ENCODE measurements at regions of chr14 and their contacts with region 1.

Region 1: DNA sequence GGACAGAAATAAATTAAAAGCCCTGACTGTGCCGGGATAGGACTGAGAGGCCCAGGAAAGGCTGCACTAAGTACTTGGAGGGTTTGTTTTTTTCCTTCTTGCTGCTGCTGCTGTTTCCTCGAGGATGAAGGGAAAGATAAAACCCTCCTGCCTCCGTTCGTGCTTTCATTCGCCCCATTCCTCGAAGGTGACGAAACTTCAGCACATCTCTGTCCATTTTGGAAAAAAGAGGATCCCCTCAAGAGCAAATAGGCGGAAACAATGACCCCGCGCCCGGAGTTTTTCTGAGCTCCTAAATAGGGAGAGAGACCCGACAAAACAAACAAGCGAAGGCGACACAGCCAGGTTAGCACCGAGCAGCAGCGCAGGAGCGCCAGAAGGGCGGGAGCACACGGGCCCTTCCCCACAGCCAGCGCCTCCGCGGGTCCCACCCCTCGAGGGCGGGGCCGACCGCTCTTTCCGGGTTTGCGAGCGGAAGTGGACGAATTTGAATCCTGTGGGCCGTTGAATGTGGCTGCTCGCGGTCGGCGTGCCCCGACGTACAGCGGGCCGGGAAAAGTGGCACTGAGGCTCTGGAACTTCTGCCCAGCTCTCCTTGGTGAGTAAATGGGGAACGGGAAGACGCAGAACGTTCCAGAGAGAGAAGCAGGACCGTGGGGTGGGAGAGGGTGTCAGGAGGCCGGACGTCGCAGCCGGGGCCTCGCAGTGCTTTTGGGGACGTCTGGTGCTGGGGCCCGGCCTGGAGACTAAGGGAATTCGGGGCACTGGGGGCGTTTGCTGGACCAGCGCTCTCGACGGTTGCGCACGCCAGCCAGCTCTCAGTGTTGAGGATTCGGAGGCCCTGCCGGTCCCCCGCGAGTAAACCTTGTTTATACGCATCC is at the start of gene G2E3:
- DNase-seq: peak; percentile 84 to 92
- ATAC-seq: peak; percentile 98
- H3K4me3 ChIP-seq: peak within 1 kb of the TSS; percentile 96
- H3K4me3 Mint-ChIP-seq: peak within 1 kb of the TSS; percentile 98
- H3K27ac ChIP-seq: peak within 1 kb of the TSS; percentile 86
- H3K27ac Mint-ChIP-seq: peak within 1 kb of the TSS; percentile 92 to 96
- H3K4me1 ChIP-seq: peaks cover 15% of the 10 kb centered on the region
- H3K4me1 Mint-ChIP-seq: peaks cover 35 to 39% of the 10 kb centered on the region in 2 donors
- H3K27me3 ChIP-seq: no peaks in the 10 kb centered on the region
- H3K27me3 Mint-ChIP-seq: peaks cover 0 to 3% of the 10 kb centered on the region in 2 donors
- CTCF ChIP-seq: no peak
- total RNA-seq, gene G2E3: 28.7 to 47.1 (median 33.4) TPM

Region 2: DNA sequence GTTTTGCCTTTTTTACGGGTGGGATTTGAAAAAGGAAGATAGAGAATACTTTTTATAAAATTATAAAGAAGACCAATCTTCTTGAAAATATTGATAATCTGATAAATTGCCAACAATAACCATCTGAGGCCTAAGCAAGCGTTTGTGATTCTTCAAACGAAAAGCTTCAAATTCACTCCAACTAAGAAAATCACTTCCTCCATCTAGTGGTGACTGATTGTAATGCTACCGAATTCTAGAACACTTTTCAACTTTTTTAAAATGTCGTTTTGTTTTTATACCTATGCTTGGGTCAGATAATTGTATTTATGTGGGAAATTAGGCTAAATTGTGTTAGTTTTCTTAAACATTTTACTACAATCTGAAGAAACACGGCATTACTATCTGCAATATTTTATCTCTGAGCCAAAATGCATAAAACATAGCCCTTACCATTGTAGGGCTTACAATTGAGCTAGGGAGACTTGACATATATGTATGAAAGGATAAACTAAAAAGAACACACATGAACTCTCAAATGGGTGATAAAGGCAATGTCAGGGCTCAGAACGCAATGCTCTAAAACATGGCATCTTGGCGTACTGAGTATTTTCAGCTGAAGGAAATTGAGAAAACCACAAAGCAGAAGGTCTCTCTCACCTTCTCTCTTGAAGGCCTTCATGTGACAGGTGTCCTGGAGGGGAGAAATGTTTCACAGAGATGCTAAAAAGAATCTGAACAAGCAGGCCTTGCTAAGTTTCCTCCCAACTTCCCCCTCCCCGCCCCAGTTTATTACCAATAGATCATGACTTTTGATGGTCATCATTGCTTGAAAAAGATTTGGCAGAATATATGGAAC is 36.8 kb before region 1 on chr14:
- intact Hi-C with region 1: no loop called
- DNase-seq: peak in 1 of 2 donors; percentile 68
- ATAC-seq: peak in 2 of 3 donors; percentile 29 to 53
- H3K4me3 ChIP-seq: no peak overlapping the region
- H3K4me3 Mint-ChIP-seq: no peak overlapping the region
- H3K27ac ChIP-seq: no peak overlapping the region
- H3K27ac Mint-ChIP-seq: no peak overlapping the region
- H3K4me1 ChIP-seq: no peaks in the 10 kb centered on the region
- H3K4me1 Mint-ChIP-seq: peaks cover 3 to 5% of the 10 kb centered on the region in 2 donors
- H3K27me3 ChIP-seq: no peaks in the 10 kb centered on the region
- H3K27me3 Mint-ChIP-seq: no peaks in the 10 kb centered on the region
- CTCF ChIP-seq: peak; percentile 80

Region 3: DNA sequence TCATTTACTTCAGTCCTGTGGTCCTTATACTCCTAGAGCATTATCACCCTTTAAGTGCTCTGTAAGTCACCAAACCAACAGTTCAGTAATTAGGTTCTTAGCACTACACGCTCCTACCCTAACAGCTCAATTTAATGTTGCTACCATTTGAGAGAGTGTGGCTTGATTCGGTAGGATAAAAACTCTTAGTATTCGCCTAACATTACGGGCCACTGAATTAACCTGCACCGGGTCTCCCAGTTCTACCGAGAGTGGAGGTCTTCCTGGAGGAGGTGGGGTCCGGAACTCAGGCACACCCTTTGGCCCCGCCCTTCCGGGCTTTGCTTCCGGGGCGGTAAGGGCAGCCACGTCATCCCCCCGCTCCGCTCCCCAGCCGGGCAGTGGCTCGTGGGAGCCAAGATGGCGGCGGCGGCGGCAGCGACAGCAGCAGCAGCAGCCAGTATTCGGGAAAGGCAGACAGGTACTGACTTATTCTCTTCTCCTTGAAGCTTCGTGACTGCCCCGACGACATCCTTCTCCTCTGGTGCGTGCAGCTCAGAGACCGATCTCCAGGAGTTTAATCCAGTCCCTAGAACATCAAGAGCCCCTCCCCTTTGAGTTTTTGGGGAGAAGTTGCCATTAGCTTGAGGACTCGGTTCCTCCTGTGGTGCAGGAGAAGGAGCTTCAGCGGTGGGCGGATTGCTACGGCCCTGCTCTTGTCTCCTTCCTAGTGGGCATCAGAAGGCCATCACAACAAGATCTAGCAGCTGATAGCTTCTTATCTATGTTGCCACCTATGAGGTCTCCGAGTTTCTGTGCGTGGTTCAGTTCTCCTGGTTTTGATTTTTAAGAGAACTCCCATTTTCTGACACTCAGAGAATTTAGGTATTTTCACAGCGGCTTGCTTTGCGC is 63.3 kb after region 1 on chr14 and contains the start of gene SCFD1:
- intact Hi-C with region 1: loop called (anchors 1 kb)
- DNase-seq: peak; percentile 88 to 96
- ATAC-seq: peak; percentile 98 to 100 (median 98)
- H3K4me3 ChIP-seq: peak within 1 kb of the TSS; percentile 74
- H3K4me3 Mint-ChIP-seq: peak within 1 kb of the TSS; percentile 92
- H3K27ac ChIP-seq: peak within 1 kb of the TSS; percentile 84
- H3K27ac Mint-ChIP-seq: peak within 1 kb of the TSS; percentile 94 to 98
- H3K4me1 ChIP-seq: peaks cover 13% of the 10 kb centered on the region
- H3K4me1 Mint-ChIP-seq: peaks cover 33 to 39% of the 10 kb centered on the region in 2 donors
- H3K27me3 ChIP-seq: no peaks in the 10 kb centered on the region
- H3K27me3 Mint-ChIP-seq: no peaks in the 10 kb centered on the region
- CTCF ChIP-seq: no peak
- total RNA-seq, gene SCFD1: 97.0 to 106 (median 105) TPM